CD14-positive monocyte (primary cell): ENCODE measurements at regions of chr11 and their contacts with region 1.

Region 1: GRCh38 chr11:27485930-27486773 is 13.6 kb upstream of the LGR4 start:
- DNase-seq: peak in 2 of 3 donors; percentile 37 to 48
- H3K4me3 ChIP-seq: no peak overlapping the region
- H3K4me3 Mint-ChIP-seq: no peak overlapping the region
- H3K27ac ChIP-seq: no peak overlapping the region
- H3K27ac Mint-ChIP-seq: no peak overlapping the region
- H3K4me1 ChIP-seq: no peaks in the 10 kb centered on the region
- H3K4me1 Mint-ChIP-seq: no peaks in the 10 kb centered on the region
- H3K27me3 ChIP-seq: no peaks in the 10 kb centered on the region
- H3K27me3 Mint-ChIP-seq: peaks cover 0 to 1% (median 0%) of the 10 kb centered on the region in 3 donors
- CTCF ChIP-seq: peak; percentile 90

Region 2: GRCh38 chr11:26286472-26287066 is 1199.6 kb before region 1 on chr11:
- intact Hi-C with region 1: loop called in 1 of 2 experiments (anchors 10 kb)
- DNase-seq: no peak
- H3K4me3 ChIP-seq: no peak overlapping the region
- H3K4me3 Mint-ChIP-seq: no peak overlapping the region
- H3K27ac ChIP-seq: no peak overlapping the region
- H3K27ac Mint-ChIP-seq: no peak overlapping the region
- H3K4me1 ChIP-seq: peaks cover 4% of the 10 kb centered on the region in 2 donors
- H3K4me1 Mint-ChIP-seq: peaks cover 6% of the 10 kb centered on the region
- H3K27me3 ChIP-seq: peaks cover 0 to 2% of the 10 kb centered on the region in 2 donors
- H3K27me3 Mint-ChIP-seq: peaks cover 4 to 6% (median 4%) of the 10 kb centered on the region in 3 donors
- CTCF ChIP-seq: no peak

Region 3: DNA sequence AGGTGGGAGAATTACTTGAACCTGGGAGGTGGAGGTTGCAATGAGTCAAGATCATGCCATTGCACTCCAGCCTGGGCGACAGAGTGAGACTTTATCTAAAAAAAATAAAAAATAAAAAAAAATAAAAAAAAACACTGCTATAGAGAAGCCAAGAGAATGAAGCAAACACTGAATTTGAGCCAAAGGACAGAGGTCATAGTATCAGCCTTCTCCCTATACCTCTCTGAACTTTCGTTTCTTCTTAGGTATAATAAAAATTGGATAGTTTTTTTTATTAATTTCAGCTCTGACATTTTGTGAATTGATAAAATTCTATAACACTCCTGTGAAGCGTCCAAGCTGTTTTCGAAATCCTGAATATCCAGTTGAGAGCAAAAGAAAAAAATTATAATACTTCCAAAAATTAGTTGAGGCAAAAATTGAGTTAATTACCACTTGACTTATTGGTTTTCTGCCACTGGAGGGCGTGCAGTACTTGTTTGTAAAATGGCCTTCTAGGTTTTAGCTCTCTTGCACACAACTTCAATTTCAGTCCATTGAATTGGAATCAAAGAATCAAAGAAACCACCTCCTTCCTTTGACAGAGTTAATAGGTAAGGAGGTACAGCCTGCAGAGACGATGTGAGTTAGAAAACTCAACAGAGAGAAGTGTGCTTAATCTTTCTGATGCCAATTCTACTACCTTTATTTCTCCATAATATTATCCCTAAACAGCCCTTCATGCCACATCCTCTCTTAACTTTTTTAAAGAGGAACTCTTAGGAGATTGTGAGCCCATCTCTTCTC is 302.3 kb before region 1 on chr11:
- intact Hi-C with region 1: loop called (anchors 5 to 10 kb)
- DNase-seq: peak in 1 of 3 donors; percentile 6
- H3K4me3 ChIP-seq: no peak overlapping the region
- H3K4me3 Mint-ChIP-seq: no peak overlapping the region
- H3K27ac ChIP-seq: no peak overlapping the region
- H3K27ac Mint-ChIP-seq: no peak overlapping the region
- H3K4me1 ChIP-seq: no peaks in the 10 kb centered on the region
- H3K4me1 Mint-ChIP-seq: no peaks in the 10 kb centered on the region
- H3K27me3 ChIP-seq: peaks cover 2 to 6% of the 10 kb centered on the region in 2 donors
- H3K27me3 Mint-ChIP-seq: peaks cover 2 to 6% (median 6%) of the 10 kb centered on the region in 3 donors
- CTCF ChIP-seq: peak; percentile 35

Region 4: DNA sequence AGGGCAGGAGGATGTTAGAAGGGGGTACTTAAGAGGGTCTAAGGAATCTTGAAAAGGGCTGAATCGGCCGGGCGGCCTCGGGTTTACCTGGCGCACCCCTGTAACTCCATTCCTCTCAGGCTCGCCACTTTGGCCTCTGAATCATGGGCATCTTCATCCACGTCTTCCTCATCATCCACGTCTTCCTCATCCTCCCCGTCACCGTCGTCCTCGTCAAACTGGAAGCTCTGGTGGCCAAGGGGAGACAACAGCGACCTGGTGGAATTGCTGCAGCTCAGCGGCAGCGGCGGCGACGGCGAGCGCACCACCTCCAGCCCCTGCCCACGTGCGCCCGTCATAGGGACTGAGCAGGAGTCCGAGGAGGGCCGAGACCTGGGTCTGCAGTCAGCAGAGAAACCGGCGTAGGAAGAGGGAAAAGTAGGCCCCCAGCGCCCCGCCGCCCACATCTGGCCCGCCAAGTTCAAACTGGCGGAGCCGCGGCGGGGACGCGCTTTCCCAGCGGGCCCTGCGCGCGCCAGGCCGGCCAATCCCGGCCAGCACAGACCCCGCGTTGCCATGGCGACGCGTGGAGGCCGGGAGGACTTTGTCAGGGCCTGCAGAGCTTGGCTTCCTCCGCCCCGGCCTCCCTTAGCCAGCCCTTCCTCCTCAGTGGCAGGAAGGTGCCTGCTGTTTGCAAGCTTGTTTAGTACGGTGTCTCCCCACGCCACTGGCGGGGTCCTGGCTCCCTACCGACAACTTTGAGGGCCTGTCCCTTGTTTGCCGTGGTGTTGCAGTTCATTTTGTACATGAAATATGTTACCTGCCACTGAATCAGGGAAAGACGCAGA is 123.2 kb before region 1 on chr11 and contains the start of gene CCDC34:
- intact Hi-C with region 1: loop called in 1 of 2 experiments (anchors 10 kb)
- DNase-seq: peak; percentile 84 to 88 (median 86)
- H3K4me3 ChIP-seq: peak within 1 kb of the TSS; percentile 64 to 88 (median 85)
- H3K4me3 Mint-ChIP-seq: peak within 1 kb of the TSS; percentile 94 to 98
- H3K27ac ChIP-seq: peak within 1 kb of the TSS in 1 of 2 donors; percentile 14
- H3K27ac Mint-ChIP-seq: peak within 1 kb of the TSS in 6 of 7 donors; percentile 4 to 82 (median 24)
- H3K4me1 ChIP-seq: peaks cover 14 to 20% of the 10 kb centered on the region in 2 donors
- H3K4me1 Mint-ChIP-seq: peaks cover 28% of the 10 kb centered on the region
- H3K27me3 ChIP-seq: no peaks in the 10 kb centered on the region
- H3K27me3 Mint-ChIP-seq: peaks cover 0 to 2% (median 2%) of the 10 kb centered on the region in 3 donors
- CTCF ChIP-seq: no peak
- polyA plus RNA-seq, gene CCDC34: 0.08 to 0.11 (median 0.11) TPM

Region 5: GRCh38 chr11:27553186-27553585 is 67.0 kb after region 1 on chr11:
- intact Hi-C with region 1: no loop called
- DNase-seq: no peak
- H3K4me3 ChIP-seq: no peak overlapping the region
- H3K4me3 Mint-ChIP-seq: no peak overlapping the region
- H3K27ac ChIP-seq: no peak overlapping the region
- H3K27ac Mint-ChIP-seq: no peak overlapping the region
- H3K4me1 ChIP-seq: no peaks in the 10 kb centered on the region
- H3K4me1 Mint-ChIP-seq: no peaks in the 10 kb centered on the region
- H3K27me3 ChIP-seq: no peaks in the 10 kb centered on the region
- H3K27me3 Mint-ChIP-seq: peaks cover 0 to 1% (median 0%) of the 10 kb centered on the region in 3 donors
- CTCF ChIP-seq: no peak